CD8-positive, alpha-beta T cell (primary cell): ENCODE measurements at regions of chr17 and their contacts with region 1.

Region 1: DNA sequence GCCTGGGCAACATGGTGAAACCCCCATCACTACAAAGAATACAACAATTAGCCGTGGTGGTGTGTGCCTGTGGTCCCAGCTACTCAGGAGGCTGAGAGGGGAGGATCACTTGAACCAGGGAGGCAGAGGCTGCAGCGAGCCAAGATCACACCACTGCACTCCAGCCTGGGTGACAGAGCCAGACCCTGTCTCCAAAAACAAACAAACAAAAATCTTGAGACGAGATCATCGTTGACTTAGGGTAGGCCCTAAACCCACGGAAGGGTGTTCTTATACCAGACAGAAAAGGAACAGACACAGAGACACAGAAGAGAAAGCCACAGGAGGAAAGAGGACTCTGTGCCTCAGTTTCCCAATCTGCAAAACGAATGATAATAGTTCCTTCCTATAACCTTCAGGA is 252.1 kb upstream of the RPL38 start:
- DNase-seq: no peak
- ATAC-seq: no peak
- H3K4me3 ChIP-seq: no peak overlapping the region
- H3K4me3 Mint-ChIP-seq: peak overlapping the region; percentile 57
- H3K27ac ChIP-seq: no peak overlapping the region
- H3K27ac Mint-ChIP-seq: no peak overlapping the region
- H3K4me1 ChIP-seq: peaks cover 4% of the 10 kb centered on the region
- H3K4me1 Mint-ChIP-seq: peaks cover 4% of the 10 kb centered on the region
- H3K27me3 ChIP-seq: peaks cover 9 to 23% of the 10 kb centered on the region in 2 experiments
- H3K27me3 Mint-ChIP-seq: peaks cover 8% of the 10 kb centered on the region
- CTCF ChIP-seq: no peak

Region 2: DNA sequence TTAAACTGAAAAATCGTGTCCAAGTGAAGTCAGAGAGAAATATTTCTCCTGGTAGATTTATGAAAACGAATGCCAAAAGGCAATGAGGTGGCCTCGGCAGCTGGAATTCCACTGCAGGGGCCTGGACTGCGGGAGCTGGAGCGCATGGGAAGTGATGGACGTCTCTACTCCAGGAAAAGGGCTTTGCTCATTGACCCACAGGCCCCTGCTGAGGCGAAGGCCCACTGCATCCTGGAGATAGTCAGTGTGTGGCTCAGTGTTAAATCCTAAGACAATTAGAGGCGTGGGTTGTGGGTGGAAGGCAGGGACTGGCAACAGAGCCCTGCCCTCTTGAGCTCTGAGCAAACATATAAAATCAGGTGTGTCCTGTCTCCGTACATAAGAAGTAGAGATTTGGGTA is 1050.3 kb before region 1 on chr17:
- CTCF ChIA-PET with region 1: no interaction called
- POLR2A ChIA-PET with region 1: no interaction called
- intact Hi-C with region 1: no loop called
- DNase-seq: no peak
- ATAC-seq: no peak
- H3K4me3 ChIP-seq: no peak overlapping the region
- H3K4me3 Mint-ChIP-seq: no peak overlapping the region
- H3K27ac ChIP-seq: no peak overlapping the region
- H3K27ac Mint-ChIP-seq: no peak overlapping the region
- H3K4me1 ChIP-seq: no peaks in the 10 kb centered on the region
- H3K4me1 Mint-ChIP-seq: no peaks in the 10 kb centered on the region
- H3K27me3 ChIP-seq: no peaks in the 10 kb centered on the region
- H3K27me3 Mint-ChIP-seq: no peaks in the 10 kb centered on the region
- CTCF ChIP-seq: no peak

Region 3: GRCh38 chr17:73998653-73999645 is 47.5 kb after region 1 on chr17:
- CTCF ChIA-PET with region 1: no interaction called
- POLR2A ChIA-PET with region 1: no interaction called
- intact Hi-C with region 1: loop called in 1 of 2 experiments (anchors 1 kb)
- DNase-seq: peak; percentile 25 to 79 (median 59)
- ATAC-seq: peak; percentile 52
- H3K4me3 ChIP-seq: no peak overlapping the region
- H3K4me3 Mint-ChIP-seq: no peak overlapping the region
- H3K27ac ChIP-seq: no peak overlapping the region
- H3K27ac Mint-ChIP-seq: no peak overlapping the region
- H3K4me1 ChIP-seq: no peaks in the 10 kb centered on the region
- H3K4me1 Mint-ChIP-seq: no peaks in the 10 kb centered on the region
- H3K27me3 ChIP-seq: peaks cover 0 to 3% of the 10 kb centered on the region in 2 experiments
- H3K27me3 Mint-ChIP-seq: peaks cover 11% of the 10 kb centered on the region
- CTCF ChIP-seq: peak; percentile 73